Transverse colon (tissue), 4 donors: ENCODE measurements at regions of chr20 and their contacts with region 1.

Region 1: GRCh38 chr20:45450097-45450818 is 19.3 kb upstream of the WFDC2 start:
- DNase-seq: peak; percentile 23
- H3K4me3 ChIP-seq: no peak overlapping the region
- H3K27ac ChIP-seq: peak overlapping the region; percentile 76 to 86 (median 80)
- H3K4me1 ChIP-seq: peaks cover 0 to 13% (median 7%) of the 10 kb centered on the region in 4 donors
- H3K27me3 ChIP-seq: no peaks in the 10 kb centered on the region
- CTCF ChIP-seq: peak; percentile 58 to 78 (median 67)
- EP300 ChIP-seq: no peak
- POLR2A ChIP-seq: no peak

Region 2: GRCh38 chr20:43583982-43584432 is 1866.3 kb before region 1 on chr20:
- in situ Hi-C with region 1: no loop called
- intact Hi-C with region 1: no loop called
- DNase-seq: peak; percentile 24
- H3K4me3 ChIP-seq: no peak overlapping the region
- H3K27ac ChIP-seq: no peak overlapping the region
- H3K4me1 ChIP-seq: peaks cover 0 to 18% (median 5%) of the 10 kb centered on the region in 4 donors
- H3K27me3 ChIP-seq: no peaks in the 10 kb centered on the region
- CTCF ChIP-seq: no peak
- EP300 ChIP-seq: no peak
- POLR2A ChIP-seq: no peak

Region 3: DNA sequence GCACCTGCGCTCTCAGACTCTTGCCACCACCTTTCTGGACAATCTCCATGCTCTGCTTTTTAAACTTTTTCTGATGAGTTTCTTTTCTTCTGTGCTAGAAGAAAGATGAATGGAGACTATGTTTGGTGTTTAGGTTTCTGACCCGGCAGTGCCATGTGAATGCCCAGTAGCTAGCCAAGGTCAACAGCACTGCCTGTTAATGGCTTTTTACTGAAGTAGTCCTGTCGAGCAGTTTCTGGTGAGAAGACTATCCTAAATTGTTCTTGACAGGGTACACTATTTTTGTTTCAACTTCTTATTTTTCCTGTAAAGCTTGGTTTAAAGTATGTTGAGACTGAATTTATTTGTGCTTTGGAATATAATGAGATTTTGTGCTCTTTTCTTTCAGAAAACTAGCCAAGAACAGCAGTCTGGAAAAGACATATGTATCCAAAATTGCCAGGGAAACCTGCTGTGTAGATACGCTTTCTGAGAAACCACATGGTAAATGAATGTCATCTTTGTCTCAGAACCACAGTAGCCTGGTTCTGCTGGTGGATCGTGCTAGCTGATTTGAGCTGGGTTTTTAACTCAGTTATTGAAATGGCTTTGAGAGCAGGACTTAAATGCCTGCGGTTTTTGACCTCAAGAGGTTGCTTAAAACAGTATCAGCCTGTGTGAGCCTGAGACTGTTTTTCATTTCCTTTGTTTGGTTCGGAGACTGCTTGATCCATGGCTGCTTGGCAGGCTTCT is 397.4 kb before region 1 on chr20:
- in situ Hi-C with region 1: no loop called
- intact Hi-C with region 1: no loop called
- DNase-seq: no peak
- H3K4me3 ChIP-seq: no peak overlapping the region
- H3K27ac ChIP-seq: peak overlapping the region in 3 of 4 donors; percentile 20 to 37 (median 37)
- H3K4me1 ChIP-seq: peaks cover 0 to 38% (median 8%) of the 10 kb centered on the region in 4 donors
- H3K27me3 ChIP-seq: no peaks in the 10 kb centered on the region
- CTCF ChIP-seq: no peak
- EP300 ChIP-seq: no peak
- POLR2A ChIP-seq: no peak

Region 4: GRCh38 chr20:45311589-45312211 is 138.6 kb before region 1 on chr20:
- in situ Hi-C with region 1: loop called in 2 of 4 experiments (anchors 10 to 25 kb)
- intact Hi-C with region 1: no loop called
- DNase-seq: peak; percentile 68
- H3K4me3 ChIP-seq: no peak overlapping the region
- H3K27ac ChIP-seq: no peak overlapping the region
- H3K4me1 ChIP-seq: peaks cover 0 to 13% (median 4%) of the 10 kb centered on the region in 4 donors
- H3K27me3 ChIP-seq: peaks cover 62% of the 10 kb centered on the region
- CTCF ChIP-seq: peak; percentile 65 to 86 (median 75)
- EP300 ChIP-seq: no peak
- POLR2A ChIP-seq: no peak

Region 5: DNA sequence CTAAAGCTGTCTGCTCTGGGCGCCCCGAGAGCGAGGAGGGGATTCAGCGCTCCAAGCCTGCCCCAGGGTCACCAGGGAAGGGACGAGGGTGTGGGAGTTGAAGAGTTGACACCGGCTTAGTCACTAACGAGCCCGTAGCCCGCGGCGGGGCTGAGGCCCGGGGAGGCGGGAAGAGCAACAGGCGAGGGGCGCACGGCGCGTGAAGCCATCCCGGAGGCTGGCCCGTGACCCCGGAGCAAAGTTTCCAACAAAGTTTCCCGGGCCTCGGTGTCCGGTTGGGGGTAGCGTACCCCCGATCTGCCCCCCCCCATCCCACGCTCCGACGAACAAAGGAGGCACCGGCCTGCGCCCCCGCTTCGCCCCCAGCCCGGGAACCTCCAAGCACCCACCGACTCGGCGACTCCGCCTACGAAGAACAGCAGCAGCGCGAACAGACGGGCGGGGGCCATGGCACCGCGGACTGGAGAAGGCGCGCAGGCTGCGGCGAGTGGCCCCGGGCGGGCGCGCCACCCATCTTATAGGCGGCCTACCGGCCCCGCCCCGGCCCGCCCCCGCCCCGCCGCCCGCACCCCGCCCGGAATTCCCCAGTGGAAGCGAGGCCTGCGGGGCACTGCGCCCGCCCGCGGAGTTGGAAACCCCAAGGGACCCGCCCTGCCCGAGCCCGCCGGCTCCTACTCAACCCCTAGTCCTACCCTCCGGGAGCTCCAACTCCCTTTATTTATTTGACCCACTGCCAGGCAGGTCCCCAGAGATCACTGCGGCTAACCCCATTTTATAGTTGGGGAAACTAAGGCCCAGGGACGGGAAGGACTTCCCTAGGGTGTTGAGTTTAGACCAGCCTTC is 102.1 kb before region 1 on chr20 and contains the start of gene SDC4:
- in situ Hi-C with region 1: no loop called
- intact Hi-C with region 1: loop called (anchors 5 kb)
- DNase-seq: peak; percentile 78
- H3K4me3 ChIP-seq: peak within 1 kb of the TSS; percentile 58 to 73 (median 68)
- H3K27ac ChIP-seq: peak within 1 kb of the TSS; percentile 92 to 96 (median 94)
- H3K4me1 ChIP-seq: peaks cover 15 to 48% (median 41%) of the 10 kb centered on the region in 4 donors
- H3K27me3 ChIP-seq: no peaks in the 10 kb centered on the region
- CTCF ChIP-seq: no peak
- EP300 ChIP-seq: no peak
- POLR2A ChIP-seq: peak; percentile 99
- total RNA-seq, gene SDC4: 60.7 to 140 (median 94.3) TPM